ENCODE measurements at regions of chr9 and their contacts with region 1.

Region 1: DNA sequence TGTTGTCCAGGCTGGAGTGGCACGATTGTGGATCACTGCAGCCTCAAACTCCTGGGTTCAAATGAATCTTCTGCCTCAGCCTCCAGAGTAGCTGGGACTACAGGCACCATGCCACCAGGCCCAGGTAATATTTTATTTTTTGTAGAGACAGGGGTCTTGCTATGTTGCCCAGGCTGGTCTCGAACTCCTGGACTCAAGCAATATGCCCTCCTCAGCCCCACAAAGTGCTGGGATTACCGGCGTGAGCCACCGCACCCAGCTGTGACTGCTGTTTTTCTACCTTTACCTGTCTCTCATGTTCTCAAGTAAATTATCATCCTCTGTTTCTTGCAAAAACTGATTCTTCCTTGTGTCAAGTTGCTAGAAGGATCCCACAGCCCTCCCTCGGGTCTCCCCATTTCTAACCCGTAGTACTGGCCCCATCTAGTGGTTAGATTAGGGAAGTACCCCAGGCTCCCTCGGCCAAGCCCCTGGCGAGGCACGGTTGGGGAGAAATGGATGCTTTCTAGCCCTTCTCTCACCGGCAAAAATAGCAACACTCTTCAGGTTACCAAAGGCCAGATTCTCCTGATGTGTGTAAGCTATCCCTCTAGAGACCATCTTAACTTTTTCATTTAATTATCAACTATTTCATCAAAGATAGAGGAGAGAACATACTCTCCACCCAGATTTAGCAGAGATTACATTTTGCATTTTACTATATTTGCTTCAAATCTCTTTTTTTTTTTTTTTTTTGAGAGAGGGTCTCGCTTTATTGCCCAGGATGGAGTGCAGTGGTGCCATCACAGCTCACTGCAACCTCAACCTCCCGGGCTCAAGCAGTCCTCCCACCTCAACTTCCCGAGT is 19.2 kb upstream of the TOR1B start:
- DNase-seq: peak; percentile 75
- H3K4me3 ChIP-seq: no peak overlapping the region
- H3K27ac ChIP-seq: no peak overlapping the region
- H3K4me1 ChIP-seq: no peaks in the 10 kb centered on the region
- H3K27me3 ChIP-seq: peaks cover 13% of the 10 kb centered on the region
- CTCF ChIP-seq: peak; percentile 89 to 94 (median 92)
- EP300 ChIP-seq: no peak
- POLR2A ChIP-seq: no peak

Region 2: GRCh38 chr9:129139993-129140396 is 643.7 kb before region 1 on chr9:
- in situ Hi-C with region 1: loop called in 3 of 4 experiments (anchors 10 to 25 kb)
- intact Hi-C with region 1: loop called (anchors 10 kb)
- DNase-seq: peak; percentile 87
- H3K4me3 ChIP-seq: peak overlapping the region; percentile 11 to 46 (median 28)
- H3K27ac ChIP-seq: peak overlapping the region; percentile 99 to 100 (median 100)
- H3K4me1 ChIP-seq: peaks cover 39 to 69% (median 58%) of the 10 kb centered on the region in 4 donors
- H3K27me3 ChIP-seq: no peaks in the 10 kb centered on the region
- CTCF ChIP-seq: no peak
- EP300 ChIP-seq: peak; percentile 77
- POLR2A ChIP-seq: peak; percentile 72

Region 3: GRCh38 chr9:129641746-129642513 is 141.8 kb before region 1 on chr9 and contains the start of gene ASB6:
- in situ Hi-C with region 1: loop called in 3 of 4 experiments (anchors 5 to 10 kb)
- intact Hi-C with region 1: no loop called
- DNase-seq: peak; percentile 98
- H3K4me3 ChIP-seq: peak within 1 kb of the TSS; percentile 86 to 97 (median 89)
- H3K27ac ChIP-seq: peak within 1 kb of the TSS; percentile 85 to 89 (median 87)
- H3K4me1 ChIP-seq: peaks cover 12 to 23% (median 17%) of the 10 kb centered on the region in 4 donors
- H3K27me3 ChIP-seq: no peaks in the 10 kb centered on the region
- CTCF ChIP-seq: peak; percentile 96 to 100 (median 99)
- EP300 ChIP-seq: no peak
- POLR2A ChIP-seq: peak; percentile 67
- total RNA-seq, gene ASB6: 21.8 to 54.2 (median 29.6) TPM

Region 4: GRCh38 chr9:129648092-129648763 is 135.5 kb before region 1 on chr9:
- in situ Hi-C with region 1: loop called (anchors 5 to 10 kb)
- intact Hi-C with region 1: no loop called
- DNase-seq: no peak
- H3K4me3 ChIP-seq: no peak overlapping the region
- H3K27ac ChIP-seq: no peak overlapping the region
- H3K4me1 ChIP-seq: no peaks in the 10 kb centered on the region
- H3K27me3 ChIP-seq: no peaks in the 10 kb centered on the region
- CTCF ChIP-seq: no peak
- EP300 ChIP-seq: no peak
- POLR2A ChIP-seq: no peak

Region 5: GRCh38 chr9:129656795-129657390 is 126.8 kb before region 1 on chr9:
- in situ Hi-C with region 1: loop called in 1 of 4 experiments (anchors 10 kb)
- intact Hi-C with region 1: no loop called
- DNase-seq: no peak
- H3K4me3 ChIP-seq: no peak overlapping the region
- H3K27ac ChIP-seq: no peak overlapping the region
- H3K4me1 ChIP-seq: peaks cover 0 to 6% (median 0%) of the 10 kb centered on the region in 4 donors
- H3K27me3 ChIP-seq: peaks cover 17% of the 10 kb centered on the region
- CTCF ChIP-seq: no peak
- EP300 ChIP-seq: no peak
- POLR2A ChIP-seq: no peak

Region 6: DNA sequence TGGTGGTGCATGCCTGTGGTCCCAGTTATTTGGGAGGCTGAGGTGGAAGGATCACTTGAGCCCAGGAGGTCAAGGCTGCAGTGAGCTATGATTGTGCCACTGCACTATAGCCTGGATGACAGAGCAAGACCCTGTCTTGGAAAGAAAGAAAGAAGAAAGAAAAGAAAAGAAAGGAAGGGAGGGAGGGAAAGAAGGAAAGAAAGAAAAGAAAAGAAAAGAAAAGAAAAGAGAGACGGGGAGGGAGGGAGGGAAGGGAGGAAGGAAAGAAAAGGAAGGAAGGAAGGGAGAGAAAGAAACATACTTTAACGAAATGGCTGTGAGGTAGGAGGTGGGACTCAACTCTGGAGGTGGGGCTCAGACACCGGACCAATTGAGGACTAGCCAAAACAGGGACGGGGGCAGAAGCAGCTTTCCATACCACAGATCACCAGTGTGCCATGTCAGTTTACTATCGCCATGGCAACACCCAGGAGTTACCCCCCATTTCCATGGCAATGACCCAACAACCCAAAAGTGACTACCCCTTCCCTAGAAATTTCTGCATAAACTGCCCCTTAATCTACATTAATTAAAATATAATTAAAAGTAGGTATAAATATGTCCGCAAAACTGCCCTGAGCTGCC is 52.1 kb before region 1 on chr9:
- in situ Hi-C with region 1: loop called in 3 of 4 experiments (anchors 5 to 10 kb)
- intact Hi-C with region 1: no loop called
- DNase-seq: no peak
- H3K4me3 ChIP-seq: no peak overlapping the region
- H3K27ac ChIP-seq: no peak overlapping the region
- H3K4me1 ChIP-seq: peaks cover 0 to 3% (median 1%) of the 10 kb centered on the region in 4 donors
- H3K27me3 ChIP-seq: peaks cover 30% of the 10 kb centered on the region
- CTCF ChIP-seq: no peak
- EP300 ChIP-seq: no peak
- POLR2A ChIP-seq: no peak

Region 7: DNA sequence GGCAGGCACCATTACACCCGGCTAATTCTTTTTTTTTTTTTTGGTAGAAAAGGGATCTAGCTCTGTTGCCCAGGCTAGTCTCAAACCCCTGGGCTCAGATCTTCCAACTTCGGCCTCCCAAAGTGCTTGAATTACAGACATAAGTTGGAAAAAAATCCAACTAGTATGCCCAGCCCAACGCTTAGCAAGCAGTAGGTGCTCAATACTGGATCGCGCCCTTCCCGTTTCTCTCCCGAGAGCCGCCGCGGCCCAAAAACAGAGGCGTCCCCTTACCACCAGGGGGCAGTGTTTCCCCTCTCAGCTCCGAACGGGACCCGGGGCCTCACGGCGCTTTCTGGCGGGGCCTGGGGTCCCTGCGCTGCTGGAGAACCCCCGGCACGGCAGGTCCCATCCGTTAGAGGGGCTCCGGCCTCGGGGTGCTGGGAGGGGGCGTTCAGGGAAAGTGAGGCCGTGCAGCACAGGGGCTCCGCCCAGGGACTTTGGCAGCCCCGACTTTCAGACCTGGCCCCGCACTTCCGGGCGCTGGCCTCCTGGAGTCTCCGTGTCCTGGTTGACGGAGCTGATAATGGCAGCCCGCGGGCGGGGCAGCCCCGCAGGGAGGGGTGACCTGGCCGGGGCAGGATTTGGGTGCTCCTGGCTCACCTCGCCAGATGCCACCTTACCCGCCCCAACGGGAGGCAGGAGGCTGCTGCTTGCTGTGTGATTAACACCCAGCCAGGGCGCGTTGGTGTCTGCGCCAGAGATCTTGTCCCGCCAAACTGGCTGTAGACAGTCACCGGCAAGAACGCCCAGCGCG is 46.1 kb before region 1 on chr9:
- in situ Hi-C with region 1: loop called (anchors 5 to 10 kb)
- intact Hi-C with region 1: loop called (anchors 1 kb)
- DNase-seq: peak; percentile 90
- H3K4me3 ChIP-seq: peak overlapping the region; percentile 47 to 71 (median 58)
- H3K27ac ChIP-seq: peak overlapping the region; percentile 43 to 81 (median 74)
- H3K4me1 ChIP-seq: peaks cover 0 to 9% (median 6%) of the 10 kb centered on the region in 4 donors
- H3K27me3 ChIP-seq: peaks cover 2% of the 10 kb centered on the region
- CTCF ChIP-seq: peak; percentile 97 to 99 (median 98)
- EP300 ChIP-seq: no peak
- POLR2A ChIP-seq: no peak